PC-3 (cell line): ENCODE measurements at regions of chr5 and their contacts with region 1.

Region 1: GRCh38 chr5:107365320-107366109 is 305.2 kb downstream of the EFNA5 start:
- DNase-seq: peak; percentile 3
- ATAC-seq: no peak
- H3K4me3 ChIP-seq: no peak overlapping the region
- H3K27ac ChIP-seq: no peak overlapping the region
- H3K4me1 ChIP-seq: peaks cover under 1% of the 10 kb centered on the region; the same call in 1 of the 2 replicates
- H3K27me3 ChIP-seq: no peaks in the 10 kb centered on the region
- CTCF ChIP-seq: no peak

Region 2: GRCh38 chr5:107431998-107432397 is 66.5 kb after region 1 on chr5:
- CTCF ChIA-PET with region 1: no interaction called
- POLR2A ChIA-PET with region 1: no interaction called
- intact Hi-C with region 1: no loop called
- DNase-seq: peak; percentile 66
- ATAC-seq: peak; percentile 68
- H3K4me3 ChIP-seq: no peak overlapping the region
- H3K27ac ChIP-seq: peak overlapping the region; percentile 17; the same call in 1 of the 2 replicates
- H3K4me1 ChIP-seq: peaks cover 18% of the 10 kb centered on the region
- H3K27me3 ChIP-seq: no peaks in the 10 kb centered on the region
- CTCF ChIP-seq: no peak

Region 3: DNA sequence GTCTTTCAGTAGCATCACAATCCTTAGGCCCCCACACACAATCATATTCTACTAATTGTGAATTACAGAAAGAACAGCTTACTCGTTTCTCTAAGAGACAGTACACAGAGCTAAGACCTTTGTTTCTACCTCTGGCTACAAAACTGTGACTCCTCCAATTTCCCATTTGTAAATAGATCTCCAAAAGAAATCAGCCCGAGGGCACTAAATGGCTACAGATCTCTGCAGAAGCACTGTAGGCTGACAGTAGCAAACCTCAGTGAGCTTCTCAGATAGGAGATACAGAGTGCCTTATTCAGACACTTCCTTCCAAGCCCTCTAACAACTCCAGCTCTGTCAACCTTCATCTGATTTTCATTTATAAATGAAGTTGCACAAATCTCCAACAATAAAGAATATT is 254.3 kb after region 1 on chr5:
- CTCF ChIA-PET with region 1: interaction called, 17 read pairs
- POLR2A ChIA-PET with region 1: no interaction called
- intact Hi-C with region 1: no loop called
- DNase-seq: peak; percentile 25
- ATAC-seq: no peak
- H3K4me3 ChIP-seq: no peak overlapping the region
- H3K27ac ChIP-seq: no peak overlapping the region
- H3K4me1 ChIP-seq: peaks cover 7% of the 10 kb centered on the region; the same call in 1 of the 2 replicates
- H3K27me3 ChIP-seq: no peaks in the 10 kb centered on the region
- CTCF ChIP-seq: no peak